ENCODE measurements at regions of chr5 and their contacts with region 1.

Region 1: DNA sequence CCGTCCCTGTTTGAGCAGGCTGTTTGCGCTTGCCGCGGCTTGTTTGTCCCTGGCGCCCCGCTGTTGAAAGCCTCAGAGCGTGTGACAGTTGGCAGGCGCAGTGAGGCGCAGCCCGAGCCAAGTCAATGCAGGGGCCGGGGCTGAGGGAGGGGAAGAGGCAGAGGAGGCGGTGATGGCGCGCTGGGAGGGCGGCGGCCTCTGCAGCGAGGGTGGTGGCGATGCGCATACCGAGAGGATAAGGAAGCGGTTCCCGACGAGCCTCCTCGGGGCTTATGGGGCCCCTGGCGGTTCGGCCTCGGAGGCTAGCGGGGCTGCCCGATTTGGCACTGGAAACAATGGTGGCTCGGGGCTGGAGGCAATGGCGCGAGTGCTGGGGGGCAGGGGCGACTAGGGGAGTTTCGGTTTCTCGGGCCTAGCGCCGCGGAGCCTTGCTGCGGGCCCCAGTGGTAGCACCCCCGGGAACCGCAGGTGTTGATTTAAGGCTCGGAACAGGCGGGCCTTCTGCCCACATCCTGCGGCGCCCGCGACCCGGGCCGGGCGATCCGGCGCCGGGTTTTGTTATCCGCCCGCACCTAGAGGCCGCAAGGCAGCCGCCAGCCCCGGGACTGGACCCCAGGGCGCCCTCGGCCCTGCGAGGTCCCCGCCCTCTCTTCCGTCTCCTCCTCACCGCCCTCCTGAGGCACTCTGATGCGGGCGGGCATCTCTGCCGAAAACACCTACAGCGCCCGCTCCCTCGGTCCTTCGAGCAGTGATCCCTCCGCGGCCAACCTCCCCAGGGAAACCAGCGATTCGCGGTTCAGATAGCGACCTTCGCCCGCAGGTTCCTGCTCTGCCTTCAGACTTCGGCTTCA is 947 bp upstream of the LNPEP start:
- DNase-seq: peak; percentile 88 to 94 (median 88)
- H3K4me3 ChIP-seq: peak overlapping the region; percentile 67
- H3K27ac ChIP-seq: peak overlapping the region; percentile 86 to 97
- H3K4me1 ChIP-seq: no peaks in the 10 kb centered on the region
- H3K27me3 ChIP-seq: no peaks in the 10 kb centered on the region
- CTCF ChIP-seq: peak in 2 of 3 donors; percentile 18 to 52
- EP300 ChIP-seq: no peak
- POLR2A ChIP-seq: peak; percentile 76

Region 2: GRCh38 chr5:96876292-96876850 is 58.6 kb before region 1 on chr5 and contains the start of gene ERAP2:
- intact Hi-C with region 1: loop called in 1 of 4 experiments (anchors 1 kb)
- DNase-seq: peak in 1 of 5 donors; percentile 29
- H3K4me3 ChIP-seq: peak within 1 kb of the TSS; percentile 68
- H3K27ac ChIP-seq: peak within 1 kb of the TSS; percentile 10 to 43
- H3K4me1 ChIP-seq: no peaks in the 10 kb centered on the region
- H3K27me3 ChIP-seq: no peaks in the 10 kb centered on the region
- CTCF ChIP-seq: no peak
- EP300 ChIP-seq: no peak
- POLR2A ChIP-seq: no peak
- total RNA-seq, gene ERAP2: 5.2 to 22.0 (median 15.9) TPM

Measured in ovary (tissue), 10 donors.